ENCODE measurements at regions of chr9 and their contacts with region 1.

Region 1: GRCh38 chr9:21311889-21312288 is 6.8 kb upstream of the IFNA5 start:
- DNase-seq: no peak

Region 2: GRCh38 chr9:21233258-21233657 is 78.6 kb before region 1 on chr9:
- intact Hi-C with region 1: loop called in 1 of 2 experiments (anchors 2 kb)
- DNase-seq: no peak